MCF 10A (cell line): ENCODE measurements at regions of chr2 and their contacts with region 1.

Region 1: DNA sequence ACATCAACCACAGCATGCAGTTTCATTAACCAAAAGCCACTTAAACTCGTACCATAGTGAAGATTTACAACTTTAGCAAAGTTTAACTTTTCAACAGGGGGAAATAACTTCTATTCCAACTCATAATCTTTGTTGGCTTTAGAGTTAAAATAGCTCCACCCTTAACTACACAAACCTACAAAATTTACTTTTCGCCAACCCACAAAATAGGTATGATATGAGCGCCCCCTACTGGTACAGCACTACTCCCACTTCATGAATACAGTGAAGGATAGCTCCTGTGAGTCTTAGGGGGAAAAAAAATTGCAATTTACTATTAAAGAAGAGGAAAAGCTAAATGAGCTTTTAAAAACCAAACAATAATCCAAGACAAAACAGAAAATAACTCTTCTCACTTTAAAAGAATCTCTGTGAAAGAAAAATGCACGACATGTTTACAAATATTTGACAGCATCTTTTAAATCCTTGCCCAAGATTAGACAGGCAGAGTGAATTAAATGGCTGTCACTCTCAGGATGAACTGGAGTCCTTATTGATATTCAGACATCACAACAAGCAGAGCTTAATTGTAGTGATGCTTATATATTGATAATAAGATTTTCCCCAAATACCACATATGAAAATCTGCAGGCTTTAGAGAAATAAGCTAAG is 32.2 kb downstream of the TMEFF2 start:
- DNase-seq: peak; percentile 76
- H3K4me3 Mint-ChIP-seq: no peak overlapping the region
- H3K27ac Mint-ChIP-seq: no peak overlapping the region
- H3K4me1 Mint-ChIP-seq: peaks cover 9% of the 10 kb centered on the region
- H3K27me3 Mint-ChIP-seq: no peaks in the 10 kb centered on the region
- CTCF ChIP-seq: peak; percentile 85

Region 2: DNA sequence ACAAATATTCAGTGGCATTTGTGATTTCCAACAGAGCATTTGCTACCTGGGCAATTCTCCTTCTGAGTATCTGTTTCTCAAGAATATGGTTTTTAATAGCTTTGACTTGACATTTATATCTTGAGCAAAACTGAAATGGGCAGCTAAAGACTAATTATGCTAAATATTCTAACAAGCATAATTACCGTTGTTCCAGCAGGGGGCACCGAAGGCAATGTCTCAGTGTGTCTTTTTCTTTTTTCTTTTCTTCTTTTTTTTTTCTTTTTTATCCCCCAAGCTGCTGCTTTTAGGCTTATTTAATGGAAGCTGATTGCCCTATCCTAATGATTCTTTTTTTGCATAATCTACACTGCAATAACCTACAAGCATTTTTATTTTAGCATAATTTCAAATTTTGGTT is 623.4 kb before region 1 on chr2:
- CTCF ChIA-PET with region 1: interaction called, 17 read pairs
- POLR2A ChIA-PET with region 1: no interaction called
- intact Hi-C with region 1: no loop called
- DNase-seq: peak; percentile 44
- H3K4me3 Mint-ChIP-seq: no peak overlapping the region
- H3K27ac Mint-ChIP-seq: no peak overlapping the region
- H3K4me1 Mint-ChIP-seq: no peaks in the 10 kb centered on the region
- H3K27me3 Mint-ChIP-seq: no peaks in the 10 kb centered on the region
- CTCF ChIP-seq: peak; percentile 49

Region 3: DNA sequence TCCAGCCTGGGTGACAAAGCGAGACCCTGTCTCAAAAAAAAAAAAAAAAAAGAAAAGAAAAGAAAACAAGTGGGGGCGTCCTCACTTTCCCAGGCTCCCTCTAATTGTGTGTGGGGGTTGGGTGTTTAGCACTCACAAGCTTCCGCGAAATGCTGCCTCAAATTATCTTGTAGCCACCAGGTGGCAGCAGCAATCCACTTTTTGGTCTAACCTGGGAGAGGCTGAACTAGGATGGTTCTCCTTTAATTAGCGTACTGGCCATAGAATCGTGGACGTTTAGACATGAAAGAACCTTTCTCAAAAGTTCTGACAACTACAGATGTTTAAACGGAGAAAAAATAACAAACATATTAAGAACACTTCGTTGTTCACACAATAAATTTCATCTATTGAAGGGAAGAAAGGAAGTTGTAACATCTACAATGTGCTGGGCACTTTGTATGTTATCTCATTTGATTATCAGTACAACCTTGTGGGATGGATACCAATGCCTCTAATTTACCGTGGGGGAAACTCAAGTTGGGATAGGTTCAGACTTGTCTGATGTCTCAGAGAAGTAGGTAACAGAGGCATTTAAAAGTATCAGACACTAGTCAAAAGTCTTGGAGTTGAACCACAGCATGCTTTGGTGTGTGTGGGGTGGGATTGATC is 607.3 kb before region 1 on chr2:
- CTCF ChIA-PET with region 1: interaction called, 85 read pairs
- POLR2A ChIA-PET with region 1: interaction called, 3 read pairs
- intact Hi-C with region 1: loop called (anchors 1 kb)
- DNase-seq: peak; percentile 89
- H3K4me3 Mint-ChIP-seq: no peak overlapping the region
- H3K27ac Mint-ChIP-seq: no peak overlapping the region
- H3K4me1 Mint-ChIP-seq: peaks cover 5% of the 10 kb centered on the region
- H3K27me3 Mint-ChIP-seq: no peaks in the 10 kb centered on the region
- CTCF ChIP-seq: peak; percentile 72

Region 4: GRCh38 chr2:191691016-191691735 is 471.3 kb before region 1 on chr2:
- CTCF ChIA-PET with region 1: interaction called, 19 read pairs
- POLR2A ChIA-PET with region 1: interaction called, 4 read pairs
- intact Hi-C with region 1: loop called (anchors 5 kb)
- DNase-seq: peak; percentile 77
- H3K4me3 Mint-ChIP-seq: peak overlapping the region; percentile 32
- H3K27ac Mint-ChIP-seq: peak overlapping the region; percentile 72
- H3K4me1 Mint-ChIP-seq: peaks cover 34% of the 10 kb centered on the region
- H3K27me3 Mint-ChIP-seq: no peaks in the 10 kb centered on the region
- CTCF ChIP-seq: peak; percentile 66

Region 5: GRCh38 chr2:191797960-191798876 is 364.3 kb before region 1 on chr2:
- CTCF ChIA-PET with region 1: interaction called, 10 read pairs
- POLR2A ChIA-PET with region 1: no interaction called
- intact Hi-C with region 1: no loop called
- DNase-seq: no peak
- H3K4me3 Mint-ChIP-seq: no peak overlapping the region
- H3K27ac Mint-ChIP-seq: no peak overlapping the region
- H3K4me1 Mint-ChIP-seq: no peaks in the 10 kb centered on the region
- H3K27me3 Mint-ChIP-seq: no peaks in the 10 kb centered on the region
- CTCF ChIP-seq: no peak

Region 6: DNA sequence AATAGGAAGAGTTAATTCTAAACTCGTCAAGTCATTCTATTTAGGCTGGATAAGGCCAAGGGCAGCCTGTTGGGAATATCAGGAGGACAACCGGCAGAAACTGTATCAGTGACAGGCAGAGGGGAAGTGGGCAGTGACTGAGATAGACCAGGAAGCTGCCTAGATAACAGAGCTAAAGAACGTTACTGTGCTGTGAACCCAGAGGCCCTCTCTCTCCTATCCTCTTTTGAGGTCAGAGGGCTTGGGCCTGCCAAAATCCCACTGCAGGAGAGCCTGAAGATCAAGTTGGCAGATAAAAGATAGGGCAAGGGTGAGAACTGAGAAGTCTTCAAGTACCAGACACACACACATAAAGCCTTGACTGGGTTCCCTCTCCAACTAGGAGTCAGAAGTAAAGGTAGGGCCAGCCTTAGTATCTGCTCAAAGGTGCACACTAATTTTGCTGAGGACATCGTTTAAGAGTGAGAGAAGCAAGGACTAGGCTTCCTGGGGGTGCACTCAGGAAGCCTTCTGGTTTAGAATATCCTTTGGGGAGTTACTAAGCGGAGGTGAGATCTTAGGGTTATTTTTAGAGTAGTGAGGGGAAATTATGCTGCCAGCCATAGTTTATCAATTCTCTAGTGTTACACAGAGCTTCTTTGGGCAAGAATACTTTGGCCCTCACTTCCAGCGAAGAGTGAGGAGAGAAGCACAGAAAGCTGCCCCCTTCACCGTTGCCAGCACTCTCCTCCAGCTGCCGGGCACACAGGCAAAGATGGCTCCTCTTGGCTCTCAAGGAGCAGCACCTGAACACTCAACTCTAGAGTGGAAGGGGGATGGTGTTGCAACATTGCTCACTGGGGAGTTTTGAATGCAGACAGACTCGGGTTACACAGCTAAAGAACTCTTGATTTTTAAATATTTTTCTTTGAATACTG is 325.4 kb before region 1 on chr2:
- CTCF ChIA-PET with region 1: interaction called, 14 read pairs
- POLR2A ChIA-PET with region 1: interaction called, 6 read pairs
- intact Hi-C with region 1: no loop called
- DNase-seq: peak; percentile 29
- H3K4me3 Mint-ChIP-seq: no peak overlapping the region
- H3K27ac Mint-ChIP-seq: no peak overlapping the region
- H3K4me1 Mint-ChIP-seq: peaks cover 23% of the 10 kb centered on the region
- H3K27me3 Mint-ChIP-seq: no peaks in the 10 kb centered on the region
- CTCF ChIP-seq: no peak

Region 7: GRCh38 chr2:191869178-191869577 is 293.3 kb before region 1 on chr2:
- CTCF ChIA-PET with region 1: interaction called, 62 read pairs
- POLR2A ChIA-PET with region 1: interaction called, 6 read pairs
- intact Hi-C with region 1: loop called (anchors 1 kb)
- DNase-seq: peak; percentile 60
- H3K4me3 Mint-ChIP-seq: no peak overlapping the region
- H3K27ac Mint-ChIP-seq: peak overlapping the region; percentile 20
- H3K4me1 Mint-ChIP-seq: peaks cover 50% of the 10 kb centered on the region
- H3K27me3 Mint-ChIP-seq: no peaks in the 10 kb centered on the region
- CTCF ChIP-seq: no peak

Region 8: DNA sequence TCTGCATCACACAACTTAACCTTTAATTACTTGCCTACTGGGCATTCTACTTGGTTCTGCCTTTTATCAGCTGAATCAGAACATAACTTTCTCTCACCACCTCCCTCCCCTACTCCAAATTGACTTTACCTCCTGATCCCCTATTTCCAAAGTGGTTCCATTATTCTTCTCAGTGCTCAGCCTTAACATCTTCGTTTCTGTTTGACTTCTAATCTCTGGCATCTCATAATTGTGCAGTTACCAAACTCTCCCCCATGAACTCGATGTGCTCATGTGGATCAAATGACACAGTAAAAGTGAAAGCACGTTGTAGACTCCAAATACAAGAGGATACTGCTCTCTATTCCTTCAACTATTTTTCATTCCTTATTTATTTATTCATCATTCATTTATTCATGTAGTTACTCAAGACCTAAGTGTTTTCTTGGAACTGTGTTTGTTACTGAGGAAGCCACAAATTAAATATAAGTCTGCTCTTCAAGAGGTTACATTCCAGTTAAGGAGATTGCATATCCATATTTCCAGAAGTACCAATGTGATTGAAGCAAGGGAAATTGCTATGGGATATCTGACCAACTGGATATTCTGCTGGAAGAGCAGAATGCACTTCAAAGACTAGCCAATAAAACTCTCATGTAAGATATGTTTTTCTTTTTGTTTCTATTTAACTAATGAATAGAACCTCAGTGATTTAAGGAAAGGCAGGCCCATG is 126.6 kb before region 1 on chr2:
- CTCF ChIA-PET with region 1: no interaction called
- POLR2A ChIA-PET with region 1: no interaction called
- intact Hi-C with region 1: no loop called
- DNase-seq: peak; percentile 15
- H3K4me3 Mint-ChIP-seq: no peak overlapping the region
- H3K27ac Mint-ChIP-seq: no peak overlapping the region
- H3K4me1 Mint-ChIP-seq: peaks cover 6% of the 10 kb centered on the region
- H3K27me3 Mint-ChIP-seq: no peaks in the 10 kb centered on the region
- CTCF ChIP-seq: no peak